ENCODE measurements at regions of chr11 and their contacts with region 1.

Region 1: DNA sequence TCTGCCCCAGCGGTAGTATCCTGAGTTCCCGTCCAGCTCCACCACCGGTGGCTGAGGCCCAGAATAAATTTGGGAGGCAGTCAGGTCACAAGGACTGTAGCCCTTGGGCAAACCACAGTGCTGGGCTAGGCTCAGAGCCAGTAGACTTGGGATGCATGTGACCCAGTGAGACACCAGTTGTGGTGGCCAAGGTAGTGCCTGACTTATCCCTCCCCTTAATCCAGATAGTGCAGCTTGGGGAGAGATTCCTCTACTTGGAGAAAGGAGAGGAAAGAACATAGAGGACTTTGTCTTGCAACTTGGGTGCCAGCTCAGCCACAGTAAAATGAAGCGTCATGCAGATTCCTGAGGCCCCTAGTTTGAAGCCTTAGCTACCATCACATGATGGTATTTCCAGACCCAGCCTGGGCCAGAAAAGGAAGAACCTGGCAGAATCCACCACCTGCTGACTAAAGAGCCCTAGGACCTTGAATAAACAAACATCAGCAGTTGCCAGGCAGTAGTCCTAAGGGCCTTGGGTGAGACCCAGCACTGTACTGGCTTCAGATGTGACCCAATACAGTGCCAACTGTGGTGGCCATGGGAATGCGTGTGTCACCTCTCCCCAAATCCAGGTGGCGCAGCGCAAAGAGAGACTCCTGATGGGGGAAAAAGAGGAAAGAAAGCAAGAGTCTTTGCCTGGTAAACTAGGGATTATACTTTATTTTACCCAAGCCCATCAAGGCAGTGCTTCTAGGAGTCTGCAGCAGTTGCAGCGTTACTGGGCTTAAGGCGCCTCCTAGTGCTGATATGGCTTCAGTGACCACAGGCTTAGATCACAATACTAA is 17.0 kb upstream of the DDX10 start:
- DNase-seq: no peak
- ATAC-seq: peak; percentile 71
- H3K4me3 Mint-ChIP-seq: no peak overlapping the region
- H3K27ac Mint-ChIP-seq: no peak overlapping the region
- H3K4me1 Mint-ChIP-seq: no peaks in the 10 kb centered on the region
- H3K27me3 Mint-ChIP-seq: peaks cover 9% of the 10 kb centered on the region
- CTCF ChIP-seq: no peak

Region 2: GRCh38 chr11:107916671-107917241 is 731.2 kb before region 1 on chr11:
- CTCF ChIA-PET with region 1: no interaction called
- POLR2A ChIA-PET with region 1: no interaction called
- intact Hi-C with region 1: loop called (anchors 2 kb)
- DNase-seq: peak; percentile 31
- ATAC-seq: peak; percentile 52
- H3K4me3 Mint-ChIP-seq: no peak overlapping the region
- H3K27ac Mint-ChIP-seq: no peak overlapping the region
- H3K4me1 Mint-ChIP-seq: peaks cover 5% of the 10 kb centered on the region
- H3K27me3 Mint-ChIP-seq: peaks cover 13% of the 10 kb centered on the region
- CTCF ChIP-seq: peak; percentile 57

Region 3: DNA sequence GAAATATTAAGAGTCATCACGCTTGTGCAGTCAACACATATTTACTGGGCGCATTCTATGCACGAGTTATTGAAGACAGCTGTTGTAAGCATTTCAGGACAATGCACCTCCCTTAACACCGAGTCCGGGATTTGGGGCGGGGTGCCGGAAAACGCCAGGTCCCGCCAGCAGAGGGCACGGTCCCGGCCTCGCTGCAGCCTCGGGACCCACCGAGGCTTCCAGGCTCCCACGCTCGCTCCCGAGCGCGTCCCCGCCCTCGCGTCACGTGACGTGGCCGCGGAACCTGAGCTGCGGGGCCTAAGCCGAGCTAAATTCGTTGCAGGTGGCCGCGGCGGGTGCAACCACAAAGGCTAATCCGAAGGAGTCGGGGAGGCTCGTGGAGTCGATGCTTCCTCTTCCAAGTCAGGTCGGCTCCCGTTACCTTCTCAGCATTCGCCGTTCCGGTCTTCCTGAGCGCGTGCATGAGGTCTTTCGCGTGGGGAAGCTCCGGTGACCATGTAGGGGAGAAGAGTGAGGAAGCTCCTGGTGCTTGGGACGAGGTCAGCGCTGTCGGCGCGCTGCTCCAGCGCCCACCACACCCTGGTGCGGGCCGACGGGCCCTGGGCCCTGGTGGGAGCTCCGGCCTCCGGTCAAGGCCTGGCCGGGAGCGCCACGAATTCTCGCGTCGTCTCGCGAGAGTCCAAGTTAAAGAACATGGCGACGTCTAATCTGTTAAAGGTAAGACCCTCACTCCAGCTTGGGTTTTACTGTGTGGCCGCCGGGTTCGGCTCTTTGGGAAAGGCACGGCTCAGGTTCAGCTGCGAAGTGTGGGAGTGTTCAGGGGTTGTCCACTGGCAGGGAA is 639.0 kb before region 1 on chr11 and contains the start of gene CUL5:
- CTCF ChIA-PET with region 1: interaction called, 3 read pairs
- POLR2A ChIA-PET with region 1: no interaction called
- intact Hi-C with region 1: loop called (anchors 1 kb)
- DNase-seq: peak; percentile 89
- ATAC-seq: peak; percentile 87
- H3K4me3 Mint-ChIP-seq: peak within 1 kb of the TSS; percentile 99
- H3K27ac Mint-ChIP-seq: peak within 1 kb of the TSS; percentile 96
- H3K4me1 Mint-ChIP-seq: peaks cover 10% of the 10 kb centered on the region
- H3K27me3 Mint-ChIP-seq: no peaks in the 10 kb centered on the region
- CTCF ChIP-seq: no peak
- total RNA-seq, gene CUL5: 38.4 and 42.0 TPM in 2 replicates

Region 4: GRCh38 chr11:108340970-108341369 is 306.9 kb before region 1 on chr11:
- CTCF ChIA-PET with region 1: no interaction called
- POLR2A ChIA-PET with region 1: no interaction called
- intact Hi-C with region 1: loop called (anchors 5 kb)
- DNase-seq: no peak
- ATAC-seq: no peak
- H3K4me3 Mint-ChIP-seq: no peak overlapping the region
- H3K27ac Mint-ChIP-seq: no peak overlapping the region
- H3K4me1 Mint-ChIP-seq: no peaks in the 10 kb centered on the region
- H3K27me3 Mint-ChIP-seq: no peaks in the 10 kb centered on the region
- CTCF ChIP-seq: no peak

Region 5: GRCh38 chr11:108414958-108415357 is 233.0 kb before region 1 on chr11:
- CTCF ChIA-PET with region 1: no interaction called
- POLR2A ChIA-PET with region 1: no interaction called
- intact Hi-C with region 1: loop called (anchors 1 kb)
- DNase-seq: no peak
- ATAC-seq: no peak
- H3K4me3 Mint-ChIP-seq: no peak overlapping the region
- H3K27ac Mint-ChIP-seq: no peak overlapping the region
- H3K4me1 Mint-ChIP-seq: no peaks in the 10 kb centered on the region
- H3K27me3 Mint-ChIP-seq: no peaks in the 10 kb centered on the region
- CTCF ChIP-seq: no peak